ENCODE measurements at regions of chr7 and their contacts with region 1.

Region 1: DNA sequence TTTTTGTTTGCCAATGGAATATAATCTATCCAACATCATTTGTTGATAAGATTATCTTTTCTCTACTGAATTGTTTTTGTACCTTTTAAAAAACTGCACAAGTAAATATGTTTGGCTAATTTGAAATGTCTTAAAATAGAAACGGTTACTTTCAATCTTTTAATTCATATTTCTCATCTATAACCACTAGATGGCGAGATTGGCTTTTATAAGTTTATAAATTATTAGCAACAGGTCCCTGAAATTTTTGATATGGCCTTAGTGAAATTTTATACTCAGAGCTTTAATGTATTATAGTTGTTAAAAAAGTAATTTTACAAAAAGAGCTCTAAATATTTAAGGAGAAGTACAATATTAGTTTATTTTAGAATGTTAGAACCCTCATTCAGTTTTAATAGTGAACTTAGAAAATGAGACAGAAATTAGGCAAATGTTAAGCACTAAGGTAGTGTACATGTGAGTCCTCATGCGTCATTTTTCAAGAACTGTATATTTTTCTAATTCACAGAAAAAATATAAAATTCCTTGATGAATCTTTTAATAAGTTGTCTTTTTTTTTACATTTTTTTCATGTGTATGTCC is 592.5 kb downstream of the ARL4A start:
- DNase-seq: no peak

Region 2: GRCh38 chr7:13179102-13179501 is 100.8 kb before region 1 on chr7:
- intact Hi-C with region 1: no loop called
- DNase-seq: no peak

Region 3: GRCh38 chr7:13725591-13725990 is 445.6 kb after region 1 on chr7:
- intact Hi-C with region 1: loop called (anchors 5 kb)
- DNase-seq: no peak

Region 4: GRCh38 chr7:13742811-13743210 is 462.9 kb after region 1 on chr7:
- intact Hi-C with region 1: loop called (anchors 5 kb)
- DNase-seq: peak in 9 of 10 donors; percentile 11 to 83 (median 43)

Region 5: GRCh38 chr7:14457568-14458453 is 1177.9 kb after region 1 on chr7:
- intact Hi-C with region 1: loop called (anchors 2 kb)
- DNase-seq: peak in 9 of 10 donors; percentile 33 to 93 (median 66)

Region 6: GRCh38 chr7:14691597-14692203 is 1411.8 kb after region 1 on chr7:
- intact Hi-C with region 1: loop called (anchors 5 kb)
- DNase-seq: peak in 9 of 10 donors; percentile 41 to 92 (median 66)